Left colon (tissue), 2 donors: ENCODE measurements at regions of chr16 and their contacts with region 1.

Region 1: DNA sequence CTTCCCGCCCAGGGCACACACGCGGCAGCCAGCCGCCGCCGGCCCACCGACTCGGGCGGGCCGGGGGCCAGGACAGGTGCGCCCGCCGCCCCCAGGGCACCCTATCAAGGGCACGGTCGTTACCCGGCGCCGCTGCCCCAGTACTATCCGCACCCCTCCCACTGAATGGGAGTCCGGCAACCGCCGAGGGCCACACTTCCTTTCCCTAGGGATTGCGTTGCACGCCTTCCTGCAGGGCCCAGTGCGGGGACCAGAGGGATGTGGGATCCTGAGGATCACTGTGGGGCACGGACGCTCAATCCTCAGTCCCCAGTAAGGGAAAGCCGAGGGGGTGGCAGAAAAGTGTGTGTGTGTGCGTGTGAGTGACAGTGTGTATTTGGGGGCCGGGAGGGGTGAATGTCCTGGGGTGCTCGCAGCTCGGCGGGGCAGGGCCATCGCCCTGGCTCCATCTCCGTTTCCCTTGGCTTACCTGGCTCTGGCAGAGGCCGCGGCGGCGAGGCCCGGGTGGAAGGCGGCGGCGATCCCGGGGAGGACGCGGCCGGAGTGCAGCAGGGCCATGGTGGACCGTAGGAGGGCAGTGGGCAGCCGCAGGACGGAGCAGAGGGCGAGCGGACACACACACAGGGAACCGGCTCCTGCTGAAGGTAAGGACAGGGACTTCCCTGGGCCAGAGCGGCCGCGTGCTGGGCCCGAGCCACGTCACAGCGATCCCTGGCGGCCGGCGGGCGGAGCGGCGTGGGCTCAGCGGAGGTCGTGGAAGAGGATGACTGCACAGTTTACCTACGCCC is at the start of gene GOT2:
- DNase-seq: peak; percentile 79 to 86
- ATAC-seq: peak; percentile 93
- total RNA-seq, gene GOT2: 96.3 to 130 TPM

Region 2: DNA sequence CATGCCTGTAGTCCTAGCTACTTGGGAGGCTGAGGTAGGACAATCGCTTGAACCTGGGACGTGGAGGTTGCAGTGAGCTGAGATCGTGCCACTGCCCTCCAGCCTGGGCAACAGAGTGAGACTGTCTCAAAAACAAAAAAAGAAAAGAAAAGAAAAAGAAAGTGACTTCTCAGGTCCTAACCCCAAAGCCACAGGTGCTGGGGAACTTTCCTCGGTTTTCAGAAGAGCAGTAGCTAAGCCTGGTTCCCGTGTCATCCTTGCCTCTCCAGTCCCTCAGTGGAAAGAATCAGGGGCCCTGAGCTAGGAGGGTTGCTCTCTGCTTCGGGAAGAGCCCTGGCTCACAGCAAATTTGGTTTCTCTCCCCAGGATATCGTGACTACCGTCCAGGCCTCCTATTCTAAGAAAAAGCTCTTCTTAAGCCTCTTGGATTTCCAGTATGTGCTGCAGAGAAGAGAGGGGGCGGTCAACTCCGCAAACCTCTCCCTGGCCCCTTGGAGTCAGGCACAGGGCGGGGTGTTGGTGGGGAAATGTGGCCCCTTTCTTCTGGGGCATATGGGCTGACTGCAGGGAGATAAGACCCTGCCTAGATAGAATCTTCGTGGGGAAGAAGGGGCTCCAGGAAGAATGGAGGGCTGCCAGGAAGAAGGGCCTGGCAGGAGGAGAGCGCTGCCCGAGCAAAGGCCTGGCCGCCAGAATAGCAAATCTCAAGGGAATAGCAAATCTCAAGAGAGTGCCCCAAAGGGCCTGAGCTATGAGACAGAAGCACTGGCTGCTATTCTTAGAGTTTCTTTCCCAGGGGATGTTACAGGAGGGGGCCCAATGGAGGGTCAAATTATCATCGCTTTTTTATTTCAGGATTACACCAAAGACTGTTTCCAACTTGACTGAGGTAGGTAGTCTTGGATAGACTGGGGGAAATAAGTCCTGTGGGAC is 1752.8 kb before region 1 on chr16:
- intact Hi-C with region 1: no loop called
- DNase-seq: no peak
- ATAC-seq: no peak

Region 3: GRCh38 chr16:58629572-58630104 is 104.2 kb before region 1 on chr16 and contains the start of gene CNOT1:
- intact Hi-C with region 1: loop called in 1 of 2 experiments (anchors 5 kb)
- DNase-seq: peak; percentile 98 to 99
- ATAC-seq: peak; percentile 83
- total RNA-seq, gene CNOT1: 208 to 236 TPM

Region 4: DNA sequence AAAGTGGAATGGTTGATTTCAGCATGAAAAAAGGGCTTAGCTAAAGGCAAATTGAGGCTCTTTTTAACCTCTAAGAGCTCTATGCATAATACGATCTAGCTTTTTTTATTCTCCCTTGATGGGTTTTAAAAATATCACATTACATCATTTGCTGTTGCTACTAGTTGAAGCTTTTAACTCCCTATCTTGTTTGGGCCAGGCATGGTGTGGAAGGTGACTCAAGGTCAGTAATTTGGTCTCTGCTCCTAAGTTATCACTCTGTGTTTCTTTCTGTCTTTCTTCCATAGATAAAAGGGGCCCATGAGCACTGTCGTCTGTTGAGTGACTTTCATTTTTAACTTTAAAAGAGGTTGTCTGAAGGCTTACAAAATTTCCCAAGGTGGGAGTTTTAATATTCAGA is 58.3 kb after region 1 on chr16:
- intact Hi-C with region 1: no loop called
- DNase-seq: no peak
- ATAC-seq: no peak